Activated T-helper 2 cell treated with anti-CD3 and anti-CD28 coated beads, Interferon-gamma antibody, Interleukin-2, Interleukin-4, amounts not matched to agents 10 μg/mL and 5 μg/mL and 100 μg/mL, durations not matched to agents 14 hours and 24 hours and 36 hours (primary cell): ENCODE measurements at regions of chr4 and their contacts with region 1.

Region 1: GRCh38 chr4:99885063-99885664 is 9.1 kb downstream of the LAMTOR3 start:
- DNase-seq: no peak
- H3K4me3 Mint-ChIP-seq: no peak overlapping the region
- H3K27ac Mint-ChIP-seq: no peak overlapping the region
- H3K4me1 Mint-ChIP-seq: no peaks in the 10 kb centered on the region
- H3K27me3 Mint-ChIP-seq: no peaks in the 10 kb centered on the region

Region 2: DNA sequence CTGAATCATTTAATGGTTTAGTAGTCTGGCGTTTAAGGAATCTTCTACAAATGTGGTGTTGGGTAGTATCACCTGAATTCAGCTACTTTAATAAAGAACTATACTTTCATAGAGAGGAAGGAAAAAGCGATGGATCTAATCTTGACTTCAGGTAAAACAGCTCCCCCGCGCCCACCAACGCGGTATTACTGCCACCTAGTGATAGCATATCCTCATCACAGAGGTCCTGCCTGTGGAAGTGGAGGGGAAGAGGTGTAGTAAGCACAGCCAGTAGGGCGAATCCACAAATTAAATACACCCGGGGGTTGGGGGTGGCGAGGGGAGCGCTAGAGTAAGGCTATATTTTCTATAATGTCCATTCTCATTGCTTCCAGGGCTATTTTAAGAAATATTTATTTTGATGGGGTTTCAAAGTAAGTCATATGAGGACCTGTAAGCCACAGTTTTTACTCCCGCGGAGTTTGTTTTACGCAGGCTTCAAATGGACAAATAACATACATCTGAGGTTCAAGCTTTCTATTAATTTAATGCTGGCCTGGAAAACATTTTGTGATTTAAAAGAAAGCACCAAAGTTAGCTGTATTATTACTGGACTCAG is 76.8 kb before region 1 on chr4:
- intact Hi-C with region 1: loop called (anchors 1 kb)
- DNase-seq: peak; percentile 61
- H3K4me3 Mint-ChIP-seq: no peak overlapping the region
- H3K27ac Mint-ChIP-seq: no peak overlapping the region
- H3K4me1 Mint-ChIP-seq: peaks cover 24% of the 10 kb centered on the region
- H3K27me3 Mint-ChIP-seq: peaks cover 10% of the 10 kb centered on the region

Region 3: DNA sequence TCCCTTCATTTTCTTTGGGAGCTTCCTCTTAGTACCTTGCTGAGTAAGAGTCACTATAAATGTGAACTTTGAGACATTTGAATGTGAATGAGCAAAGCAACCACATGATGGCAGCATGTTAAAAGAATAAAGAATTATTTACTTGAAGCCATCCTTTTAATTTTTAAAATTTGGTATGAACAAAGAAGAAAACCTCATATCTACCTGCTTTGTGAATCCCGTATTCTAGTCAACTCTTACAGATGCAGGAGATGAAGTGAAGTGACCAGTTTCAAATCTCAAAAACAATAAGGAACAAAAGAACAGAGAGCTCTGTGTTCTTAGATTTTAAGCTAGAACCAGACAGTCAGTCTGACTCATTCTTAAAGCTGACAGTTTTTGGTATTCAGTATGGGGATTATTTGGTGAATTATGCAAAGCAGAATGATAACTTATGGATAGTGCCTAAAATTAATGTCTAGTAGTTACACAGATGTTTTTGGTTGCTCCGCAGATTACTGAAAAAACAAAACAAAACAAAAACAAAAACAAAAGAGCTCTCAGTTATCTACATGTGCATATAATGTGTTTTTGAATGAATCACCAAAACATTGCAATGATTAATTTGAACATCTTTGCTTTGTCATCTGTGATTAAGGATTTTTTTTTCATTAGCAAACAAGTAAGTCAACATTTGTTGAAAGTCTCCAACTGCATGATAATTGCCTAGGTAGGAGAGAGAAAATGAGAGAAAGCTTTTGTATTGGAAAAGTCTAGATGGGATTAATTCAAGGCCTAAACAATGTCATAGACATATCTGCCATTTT is 113.1 kb after region 1 on chr4:
- intact Hi-C with region 1: no loop called
- DNase-seq: no peak
- H3K4me3 Mint-ChIP-seq: no peak overlapping the region
- H3K27ac Mint-ChIP-seq: no peak overlapping the region
- H3K4me1 Mint-ChIP-seq: peaks cover 2% of the 10 kb centered on the region
- H3K27me3 Mint-ChIP-seq: peaks cover 10% of the 10 kb centered on the region

Region 4: GRCh38 chr4:100082852-100083251 is 197.7 kb after region 1 on chr4:
- intact Hi-C with region 1: no loop called
- DNase-seq: no peak
- H3K4me3 Mint-ChIP-seq: no peak overlapping the region
- H3K27ac Mint-ChIP-seq: peak overlapping the region; percentile 68
- H3K4me1 Mint-ChIP-seq: peaks cover 26% of the 10 kb centered on the region
- H3K27me3 Mint-ChIP-seq: no peaks in the 10 kb centered on the region